ENCODE measurements at regions of chr1 and their contacts with region 1.

Region 1: DNA sequence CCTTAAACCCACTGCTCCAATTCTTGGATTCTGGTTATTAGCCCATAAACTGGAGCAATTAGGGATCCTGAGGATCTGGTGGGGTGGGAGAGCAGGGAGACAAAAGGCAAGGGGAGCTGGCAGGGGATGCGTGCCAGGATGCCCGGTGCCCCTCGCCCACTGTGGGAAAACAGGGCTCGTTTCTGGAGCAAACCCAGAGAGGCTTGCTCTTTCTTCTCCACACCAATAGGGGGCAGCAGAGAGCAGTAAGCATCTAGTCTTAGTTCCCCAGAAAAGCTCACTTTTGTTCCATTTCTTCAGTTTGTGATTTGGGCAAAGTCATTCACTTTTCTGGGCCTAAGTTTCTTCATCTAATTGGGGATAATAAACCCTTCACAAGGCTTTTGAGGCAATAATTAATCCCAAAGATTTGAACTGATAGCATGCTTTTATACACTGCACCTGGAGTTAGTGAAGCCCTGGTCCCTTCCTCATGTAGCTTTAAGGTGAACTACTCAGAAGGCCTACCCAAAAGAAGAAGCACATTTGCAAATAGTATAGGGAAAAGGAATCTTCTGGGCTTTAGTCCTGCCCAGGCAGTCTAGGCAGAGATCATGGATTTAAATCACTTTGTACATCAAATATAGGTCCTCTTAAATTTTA is 160.6 kb upstream of the USP24 start:
- DNase-seq: peak; percentile 34
- ATAC-seq: peak; percentile 62
- H3K4me3 ChIP-seq: no peak overlapping the region
- H3K27ac ChIP-seq: no peak overlapping the region
- H3K4me1 ChIP-seq: no peaks in the 10 kb centered on the region
- H3K27me3 ChIP-seq: no peaks in the 10 kb centered on the region
- CTCF ChIP-seq: peak; percentile 76
- EP300 ChIP-seq: no peak
- POLR2A ChIP-seq: no peak
- RAD21 ChIP-seq: peak; percentile 52; the same call in 1 of the 2 replicates

Region 2: DNA sequence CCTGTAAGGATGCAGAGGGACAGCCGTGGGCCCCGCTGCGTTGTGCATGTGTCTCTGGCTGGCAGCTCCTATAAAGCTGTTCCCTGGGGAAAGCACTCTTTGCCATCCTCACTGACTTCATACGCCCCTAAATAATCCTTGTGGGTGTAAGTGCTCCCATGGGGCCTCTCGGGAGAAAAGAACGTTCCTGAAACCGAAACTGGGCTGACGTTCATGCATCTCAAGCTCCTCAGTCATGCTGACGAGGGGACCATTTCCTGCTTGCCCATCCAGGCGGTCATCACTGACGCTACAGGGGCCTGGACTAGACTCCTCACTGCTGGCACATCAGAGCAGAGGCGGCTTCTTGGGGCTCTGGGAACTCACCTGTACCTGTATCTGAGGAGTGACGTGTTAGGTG is 87.5 kb before region 1 on chr1:
- CTCF ChIA-PET with region 1: no interaction called
- POLR2A ChIA-PET with region 1: no interaction called
- in situ Hi-C with region 1: no loop called
- intact Hi-C with region 1: no loop called
- DNase-seq: no peak
- ATAC-seq: no peak
- H3K4me3 ChIP-seq: no peak overlapping the region
- H3K27ac ChIP-seq: no peak overlapping the region
- H3K4me1 ChIP-seq: peaks cover 5% of the 10 kb centered on the region; the same call in 1 of the 2 replicates
- H3K27me3 ChIP-seq: peaks cover 0 to 3% of the 10 kb centered on the region in 2 experiments; a peak in 2 of 5 replicates
- CTCF ChIP-seq: no peak
- EP300 ChIP-seq: no peak
- POLR2A ChIP-seq: no peak
- RAD21 ChIP-seq: no peak

Region 3: DNA sequence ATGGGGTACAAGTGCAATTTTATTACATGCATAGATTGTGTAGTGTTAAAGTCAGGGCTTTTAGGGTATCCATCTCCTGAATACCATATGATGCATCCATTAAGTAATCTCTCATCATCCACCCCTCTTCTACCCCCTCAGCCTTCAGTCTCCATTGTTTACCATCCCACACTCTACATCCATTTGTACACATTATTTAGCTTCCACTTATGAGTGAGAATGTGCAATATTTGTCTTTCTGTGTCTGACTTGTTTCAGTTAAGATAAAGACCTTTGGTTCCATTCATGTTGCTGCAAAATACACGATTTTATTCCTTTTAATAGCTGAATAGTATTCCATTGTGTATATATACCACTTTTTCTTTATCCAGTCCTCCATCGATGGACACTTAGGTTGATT is 62.0 kb after region 1 on chr1:
- CTCF ChIA-PET with region 1: no interaction called
- POLR2A ChIA-PET with region 1: no interaction called
- in situ Hi-C with region 1: no loop called
- intact Hi-C with region 1: no loop called
- DNase-seq: peak; percentile 71
- ATAC-seq: no peak
- H3K4me3 ChIP-seq: no peak overlapping the region
- H3K27ac ChIP-seq: no peak overlapping the region
- H3K4me1 ChIP-seq: peaks cover 23% of the 10 kb centered on the region
- H3K27me3 ChIP-seq: no peaks in the 10 kb centered on the region
- CTCF ChIP-seq: no peak
- EP300 ChIP-seq: peak in 1 of 2 experiments; percentile 55; a peak in 1 of 4 replicates
- POLR2A ChIP-seq: no peak
- RAD21 ChIP-seq: no peak

Region 4: GRCh38 chr1:55478742-55479141 is 103.0 kb after region 1 on chr1:
- CTCF ChIA-PET with region 1: interaction called, 3 read pairs
- POLR2A ChIA-PET with region 1: no interaction called
- in situ Hi-C with region 1: no loop called
- intact Hi-C with region 1: loop called (anchors 5 kb)
- DNase-seq: peak; percentile 20
- ATAC-seq: peak; percentile 43
- H3K4me3 ChIP-seq: no peak overlapping the region
- H3K27ac ChIP-seq: no peak overlapping the region
- H3K4me1 ChIP-seq: peaks cover 45% of the 10 kb centered on the region
- H3K27me3 ChIP-seq: no peaks in the 10 kb centered on the region
- CTCF ChIP-seq: peak; percentile 54
- EP300 ChIP-seq: no peak
- POLR2A ChIP-seq: no peak
- RAD21 ChIP-seq: 0 out of 2 replicates have a peak, but pooled peaks have one; percentile 34

Region 5: GRCh38 chr1:55506686-55507577 is 131.2 kb after region 1 on chr1:
- CTCF ChIA-PET with region 1: no interaction called
- POLR2A ChIA-PET with region 1: no interaction called
- in situ Hi-C with region 1: no loop called
- intact Hi-C with region 1: no loop called
- DNase-seq: no peak
- ATAC-seq: no peak
- H3K4me3 ChIP-seq: no peak overlapping the region
- H3K27ac ChIP-seq: no peak overlapping the region
- H3K4me1 ChIP-seq: peaks cover 29% of the 10 kb centered on the region
- H3K27me3 ChIP-seq: peaks cover 0 to 3% of the 10 kb centered on the region in 2 experiments; a peak in 1 of 5 replicates
- CTCF ChIP-seq: no peak
- EP300 ChIP-seq: no peak
- POLR2A ChIP-seq: no peak
- RAD21 ChIP-seq: no peak

Region 6: GRCh38 chr1:55893155-55893554 is 517.4 kb after region 1 on chr1:
- CTCF ChIA-PET with region 1: interaction called, 5 read pairs
- POLR2A ChIA-PET with region 1: no interaction called
- in situ Hi-C with region 1: loop called (anchors 5 kb)
- intact Hi-C with region 1: loop called (anchors 2 kb)
- DNase-seq: peak; percentile 59
- ATAC-seq: peak; percentile 66
- H3K4me3 ChIP-seq: no peak overlapping the region
- H3K27ac ChIP-seq: no peak overlapping the region
- H3K4me1 ChIP-seq: no peaks in the 10 kb centered on the region; the same call in 1 of the 2 replicates
- H3K27me3 ChIP-seq: no peaks in the 10 kb centered on the region; a peak in 1 of 5 replicates
- CTCF ChIP-seq: peak; percentile 63
- EP300 ChIP-seq: no peak
- POLR2A ChIP-seq: no peak
- RAD21 ChIP-seq: peak; percentile 36; the same call in 1 of the 2 replicates

Measured in HepG2 (cell line).